ENCODE measurements at regions of chr7 and their contacts with region 1.

Region 1: DNA sequence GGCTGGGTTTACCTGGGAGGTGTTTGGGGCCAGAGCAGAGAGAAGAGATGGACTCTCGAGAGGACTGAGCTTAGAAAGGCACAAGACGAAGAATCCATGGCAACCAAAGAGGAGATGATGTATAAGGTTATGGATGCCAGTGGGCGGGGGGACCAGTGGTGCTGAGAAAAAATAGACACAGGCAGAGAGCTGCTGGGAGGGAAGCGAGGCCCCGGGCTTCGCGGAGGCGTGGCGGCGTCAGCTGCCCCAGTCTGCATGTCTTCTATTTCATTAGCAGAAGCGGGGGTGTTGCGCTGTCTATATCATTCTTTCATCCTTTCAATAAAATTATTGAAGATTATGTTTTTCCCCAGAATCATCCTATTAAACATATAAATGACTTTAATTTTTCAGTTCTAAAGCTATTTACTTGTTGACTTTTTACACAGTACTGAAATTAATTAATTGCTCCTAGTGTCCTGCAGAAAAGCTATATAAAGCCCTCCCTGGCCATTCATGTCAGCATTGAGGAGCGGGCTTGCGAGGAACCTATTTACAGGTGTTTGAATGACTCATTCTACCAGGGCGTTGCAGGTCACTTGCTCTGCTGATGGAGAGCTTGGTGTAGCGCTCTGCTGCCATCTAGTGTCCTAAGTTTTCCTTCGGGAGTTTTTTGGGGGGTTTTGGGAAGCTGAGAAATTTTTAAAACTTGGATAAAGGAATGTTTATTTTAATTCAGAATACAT is 42.9 kb upstream of the BHLHA15 start:
- DNase-seq: peak; percentile 72
- ATAC-seq: peak; percentile 76
- H3K4me3 Mint-ChIP-seq: no peak overlapping the region
- H3K27ac Mint-ChIP-seq: peak overlapping the region; percentile 70; the same call in 1 of the 2 replicates
- H3K4me1 Mint-ChIP-seq: peaks cover 26% of the 10 kb centered on the region
- H3K27me3 Mint-ChIP-seq: no peaks in the 10 kb centered on the region
- CTCF ChIP-seq: peak; percentile 67

Region 2: GRCh38 chr7:98051118-98051744 is 117.1 kb before region 1 on chr7:
- CTCF ChIA-PET with region 1: interaction called, 10 read pairs
- POLR2A ChIA-PET with region 1: no interaction called
- DNase-seq: peak; percentile 93
- ATAC-seq: peak; percentile 95
- H3K4me3 Mint-ChIP-seq: peak overlapping the region; percentile 24
- H3K27ac Mint-ChIP-seq: no peak overlapping the region
- H3K4me1 Mint-ChIP-seq: peaks cover 9% of the 10 kb centered on the region
- H3K27me3 Mint-ChIP-seq: peaks cover 3% of the 10 kb centered on the region; the same call in 1 of the 2 replicates
- CTCF ChIP-seq: no peak

Region 3: GRCh38 chr7:98066934-98067507 is 101.3 kb before region 1 on chr7:
- CTCF ChIA-PET with region 1: no interaction called
- POLR2A ChIA-PET with region 1: no interaction called
- DNase-seq: no peak
- ATAC-seq: no peak
- H3K4me3 Mint-ChIP-seq: no peak overlapping the region
- H3K27ac Mint-ChIP-seq: no peak overlapping the region
- H3K4me1 Mint-ChIP-seq: no peaks in the 10 kb centered on the region
- H3K27me3 Mint-ChIP-seq: peaks cover 3% of the 10 kb centered on the region; the same call in 1 of the 2 replicates
- CTCF ChIP-seq: no peak

Region 4: GRCh38 chr7:98178347-98178746 is 10.0 kb after region 1 on chr7:
- CTCF ChIA-PET with region 1: interaction called, 10 read pairs
- POLR2A ChIA-PET with region 1: no interaction called
- DNase-seq: no peak
- ATAC-seq: peak; percentile 50
- H3K4me3 Mint-ChIP-seq: no peak overlapping the region
- H3K27ac Mint-ChIP-seq: 0 out of 2 replicates have a peak overlapping the region, but pooled peaks have one; percentile 15
- H3K4me1 Mint-ChIP-seq: peaks cover 29% of the 10 kb centered on the region
- H3K27me3 Mint-ChIP-seq: no peaks in the 10 kb centered on the region
- CTCF ChIP-seq: no peak

Region 5: DNA sequence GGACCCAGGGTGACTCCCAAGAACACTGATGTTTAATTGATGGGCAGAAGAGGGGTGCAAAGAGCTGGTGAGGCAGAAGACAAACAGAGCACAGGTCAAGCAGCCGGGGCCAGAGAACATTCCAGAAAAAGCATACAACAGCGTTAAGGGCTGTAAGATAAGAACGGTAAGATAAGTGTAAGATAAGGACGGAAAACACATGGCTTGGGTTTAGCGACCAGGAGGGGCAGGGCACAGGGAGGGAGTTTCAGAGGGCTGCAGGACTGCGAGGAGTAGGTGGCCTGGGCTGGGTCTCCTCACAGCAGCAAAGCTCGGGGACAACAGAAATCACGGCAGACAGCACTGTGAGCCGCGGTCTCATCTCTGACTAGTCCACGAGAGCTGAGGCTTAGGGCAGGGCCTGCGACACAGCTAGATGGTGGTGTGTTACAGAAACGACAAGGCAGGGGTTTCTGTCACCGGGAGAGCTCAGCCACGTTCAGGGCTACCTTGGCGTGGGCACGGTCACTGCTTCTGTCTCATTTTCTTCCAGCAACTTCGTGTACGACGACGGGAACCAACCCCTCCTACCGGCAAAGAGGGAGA is 137.7 kb after region 1 on chr7:
- CTCF ChIA-PET with region 1: no interaction called
- POLR2A ChIA-PET with region 1: no interaction called
- DNase-seq: no peak
- ATAC-seq: no peak
- H3K4me3 Mint-ChIP-seq: no peak overlapping the region
- H3K27ac Mint-ChIP-seq: peak overlapping the region; percentile 64; the same call in 1 of the 2 replicates
- H3K4me1 Mint-ChIP-seq: peaks cover 11% of the 10 kb centered on the region
- H3K27me3 Mint-ChIP-seq: peaks cover 2% of the 10 kb centered on the region; the same call in 1 of the 2 replicates
- CTCF ChIP-seq: no peak

Region 6: DNA sequence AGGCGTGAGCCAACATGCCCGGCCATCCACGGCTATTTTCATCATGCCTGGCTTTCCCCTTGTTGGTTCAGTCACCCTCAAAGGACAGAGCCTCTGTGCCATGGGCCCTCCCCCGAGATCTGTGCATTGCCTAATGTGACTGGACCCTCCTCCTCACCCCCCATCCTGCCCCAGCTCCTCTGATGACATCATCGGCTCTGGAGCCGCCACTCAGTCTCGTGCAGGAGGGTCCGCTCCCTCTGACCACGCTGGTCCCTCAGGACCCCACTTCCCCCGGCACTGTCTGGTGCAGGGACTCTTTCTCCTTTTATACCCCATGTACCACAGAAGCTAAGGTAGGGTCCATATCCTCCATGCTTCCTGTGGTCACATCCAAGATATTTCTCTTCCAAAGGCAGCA is 265.8 kb after region 1 on chr7:
- CTCF ChIA-PET with region 1: no interaction called
- POLR2A ChIA-PET with region 1: no interaction called
- DNase-seq: no peak
- ATAC-seq: no peak
- H3K4me3 Mint-ChIP-seq: no peak overlapping the region
- H3K27ac Mint-ChIP-seq: no peak overlapping the region
- H3K4me1 Mint-ChIP-seq: 0 out of 2 replicates have a peak, but pooled peaks cover 2% of the 10 kb centered on the region
- H3K27me3 Mint-ChIP-seq: no peaks in the 10 kb centered on the region; the same call in none of the 2 replicates
- CTCF ChIP-seq: no peak